HepG2 (cell line): ENCODE measurements at regions of chr5 and their contacts with region 1.

Region 1: GRCh38 chr5:78008356-78008967 is 232.3 kb upstream of the TBCA start:
- DNase-seq: peak; percentile 31
- ATAC-seq: peak; percentile 77
- H3K4me3 ChIP-seq: no peak overlapping the region
- H3K27ac ChIP-seq: no peak overlapping the region
- H3K4me1 ChIP-seq: peaks cover 18% of the 10 kb centered on the region; the same call in 1 of the 2 replicates
- H3K27me3 ChIP-seq: no peaks in the 10 kb centered on the region
- CTCF ChIP-seq: peak; percentile 75
- EP300 ChIP-seq: no peak
- POLR2A ChIP-seq: no peak
- RAD21 ChIP-seq: peak; percentile 55; the same call in 1 of the 2 replicates

Region 2: GRCh38 chr5:77645158-77645994 is 363.1 kb before region 1 on chr5:
- CTCF ChIA-PET with region 1: interaction called, 9 read pairs
- POLR2A ChIA-PET with region 1: no interaction called
- in situ Hi-C with region 1: no loop called
- intact Hi-C with region 1: loop called (anchors 1 kb)
- DNase-seq: peak; percentile 13
- ATAC-seq: peak; percentile 98
- H3K4me3 ChIP-seq: peak overlapping the region; percentile 6 to 59 (median 49); a peak in 2 of 6 replicates
- H3K27ac ChIP-seq: no peak overlapping the region
- H3K4me1 ChIP-seq: no peaks in the 10 kb centered on the region
- H3K27me3 ChIP-seq: peaks cover 5 to 51% of the 10 kb centered on the region in 2 experiments; a peak in 4 of 5 replicates
- CTCF ChIP-seq: peak; percentile 54; the same call in 1 of the 2 replicates
- EP300 ChIP-seq: no peak
- POLR2A ChIP-seq: no peak
- RAD21 ChIP-seq: peak; percentile 88

Region 3: DNA sequence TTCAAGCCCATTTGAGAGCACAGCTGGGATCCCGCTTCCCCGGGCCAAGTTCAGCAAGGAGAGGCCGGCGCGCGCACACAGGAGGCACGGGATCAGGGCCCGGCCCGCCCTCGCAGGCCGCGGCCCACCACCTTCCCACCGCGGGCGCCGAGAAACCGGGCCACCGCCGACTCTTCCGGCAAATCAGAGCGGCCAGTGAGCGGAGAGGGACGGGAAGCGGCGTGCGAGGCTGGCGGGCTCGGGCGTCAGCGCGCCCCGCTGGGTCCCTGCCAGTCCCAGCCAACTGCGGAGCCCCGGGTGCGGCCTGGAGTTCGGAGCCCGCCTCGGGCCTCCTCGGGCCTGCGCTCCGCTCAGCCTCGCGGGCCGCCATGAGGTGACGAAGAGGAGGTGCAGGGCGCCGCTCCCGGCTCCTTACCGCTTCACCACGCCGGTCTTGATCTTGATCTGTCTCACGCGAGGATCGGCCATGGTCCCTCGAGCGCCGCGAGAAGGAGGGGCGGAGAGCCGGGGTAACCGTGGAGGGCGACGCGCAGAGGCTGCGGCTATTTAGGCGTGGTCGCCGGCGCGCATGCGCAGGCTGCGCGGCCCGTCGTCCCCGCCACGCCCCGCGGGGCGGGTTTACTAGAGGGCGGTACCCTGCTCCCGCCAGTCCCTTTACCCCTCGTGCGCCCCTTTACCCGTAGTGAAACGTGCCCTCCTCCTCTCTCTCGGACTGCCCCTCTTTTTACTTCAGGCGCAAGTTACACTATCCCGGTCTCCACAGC is 232.5 kb before region 1 on chr5 and contains the start of gene TBCA:
- CTCF ChIA-PET with region 1: no interaction called
- POLR2A ChIA-PET with region 1: no interaction called
- in situ Hi-C with region 1: no loop called
- intact Hi-C with region 1: loop called (anchors 10 kb)
- DNase-seq: peak; percentile 78
- ATAC-seq: peak; percentile 91
- H3K4me3 ChIP-seq: peak within 1 kb of the TSS; percentile 74 to 90 (median 85)
- H3K27ac ChIP-seq: peak within 1 kb of the TSS; percentile 84
- H3K4me1 ChIP-seq: peaks cover 59% of the 10 kb centered on the region
- H3K27me3 ChIP-seq: no peaks in the 10 kb centered on the region
- CTCF ChIP-seq: peak; percentile 36
- EP300 ChIP-seq: no peak
- POLR2A ChIP-seq: peak; percentile 75 to 78
- RAD21 ChIP-seq: peak; percentile 49
- total RNA-seq, gene TBCA: 309 and 398 TPM in 2 replicates